MCF 10A (cell line): ENCODE measurements at regions of chr18 and their contacts with region 1.

Region 1: DNA sequence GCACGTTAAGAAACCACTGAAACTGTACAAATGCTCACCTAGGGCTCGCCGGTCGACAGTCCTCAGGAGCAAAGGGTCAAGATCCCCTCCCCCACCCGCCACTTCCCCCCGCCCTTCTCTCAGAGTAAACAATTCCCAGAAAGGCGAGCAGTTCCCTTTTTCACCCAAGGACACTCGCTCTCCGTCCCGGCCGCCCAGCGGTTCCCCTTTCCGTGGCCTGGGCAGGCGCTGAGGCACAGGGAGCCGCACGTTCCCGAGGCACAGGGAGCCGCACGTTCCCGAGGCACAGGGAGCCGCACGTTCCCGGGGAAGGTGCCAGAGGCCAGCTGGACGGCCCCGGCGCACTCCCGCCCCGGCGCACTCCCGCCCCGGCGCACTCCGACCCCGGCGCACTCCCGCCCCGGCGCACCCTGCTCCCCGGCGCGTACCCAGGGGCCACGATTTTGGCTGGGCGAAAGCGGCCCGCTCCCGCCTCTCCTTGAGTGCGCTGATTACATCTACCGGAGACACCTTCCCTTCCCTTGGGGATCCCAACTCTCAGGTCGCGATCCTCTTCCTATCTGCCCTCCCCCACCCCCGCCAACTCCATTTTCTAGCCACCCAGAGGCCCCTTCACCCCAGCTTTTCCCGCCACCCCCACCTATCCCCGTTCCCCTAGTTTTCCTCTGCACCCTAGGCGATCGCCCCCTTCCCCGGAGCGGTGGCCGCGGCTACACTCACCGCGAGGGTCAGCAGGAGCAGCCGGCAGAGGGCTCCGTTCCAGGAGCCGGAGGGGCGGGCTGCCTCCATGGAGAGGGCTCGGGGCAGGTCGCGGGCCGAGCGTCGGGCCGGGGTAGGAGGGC is 817 bp downstream of the DSC2 start:
- DNase-seq: peak; percentile 53
- H3K4me3 Mint-ChIP-seq: peak overlapping the region; percentile 82
- H3K27ac Mint-ChIP-seq: peak overlapping the region; percentile 81
- H3K4me1 Mint-ChIP-seq: peaks cover 30% of the 10 kb centered on the region
- H3K27me3 Mint-ChIP-seq: no peaks in the 10 kb centered on the region
- CTCF ChIP-seq: no peak

Region 2: GRCh38 chr18:31197676-31198075 is 96.3 kb after region 1 on chr18:
- CTCF ChIA-PET with region 1: interaction called, 3 read pairs
- POLR2A ChIA-PET with region 1: interaction called, 83 read pairs
- intact Hi-C with region 1: no loop called
- DNase-seq: peak; percentile 69
- H3K4me3 Mint-ChIP-seq: no peak overlapping the region
- H3K27ac Mint-ChIP-seq: no peak overlapping the region
- H3K4me1 Mint-ChIP-seq: peaks cover 20% of the 10 kb centered on the region
- H3K27me3 Mint-ChIP-seq: no peaks in the 10 kb centered on the region
- CTCF ChIP-seq: no peak

Region 3: GRCh38 chr18:31206787-31207381 is 105.5 kb after region 1 on chr18:
- CTCF ChIA-PET with region 1: interaction called, 4 read pairs
- POLR2A ChIA-PET with region 1: interaction called, 22 read pairs
- intact Hi-C with region 1: no loop called
- DNase-seq: peak; percentile 94
- H3K4me3 Mint-ChIP-seq: peak overlapping the region; percentile 69
- H3K27ac Mint-ChIP-seq: peak overlapping the region; percentile 77
- H3K4me1 Mint-ChIP-seq: peaks cover 32% of the 10 kb centered on the region
- H3K27me3 Mint-ChIP-seq: no peaks in the 10 kb centered on the region
- CTCF ChIP-seq: peak; percentile 7

Region 4: GRCh38 chr18:31255953-31256352 is 154.5 kb after region 1 on chr18:
- CTCF ChIA-PET with region 1: no interaction called
- POLR2A ChIA-PET with region 1: interaction called, 10 read pairs
- intact Hi-C with region 1: no loop called
- DNase-seq: peak; percentile 85
- H3K4me3 Mint-ChIP-seq: peak overlapping the region; percentile 12
- H3K27ac Mint-ChIP-seq: peak overlapping the region; percentile 64
- H3K4me1 Mint-ChIP-seq: peaks cover 16% of the 10 kb centered on the region
- H3K27me3 Mint-ChIP-seq: no peaks in the 10 kb centered on the region
- CTCF ChIP-seq: no peak

Region 5: DNA sequence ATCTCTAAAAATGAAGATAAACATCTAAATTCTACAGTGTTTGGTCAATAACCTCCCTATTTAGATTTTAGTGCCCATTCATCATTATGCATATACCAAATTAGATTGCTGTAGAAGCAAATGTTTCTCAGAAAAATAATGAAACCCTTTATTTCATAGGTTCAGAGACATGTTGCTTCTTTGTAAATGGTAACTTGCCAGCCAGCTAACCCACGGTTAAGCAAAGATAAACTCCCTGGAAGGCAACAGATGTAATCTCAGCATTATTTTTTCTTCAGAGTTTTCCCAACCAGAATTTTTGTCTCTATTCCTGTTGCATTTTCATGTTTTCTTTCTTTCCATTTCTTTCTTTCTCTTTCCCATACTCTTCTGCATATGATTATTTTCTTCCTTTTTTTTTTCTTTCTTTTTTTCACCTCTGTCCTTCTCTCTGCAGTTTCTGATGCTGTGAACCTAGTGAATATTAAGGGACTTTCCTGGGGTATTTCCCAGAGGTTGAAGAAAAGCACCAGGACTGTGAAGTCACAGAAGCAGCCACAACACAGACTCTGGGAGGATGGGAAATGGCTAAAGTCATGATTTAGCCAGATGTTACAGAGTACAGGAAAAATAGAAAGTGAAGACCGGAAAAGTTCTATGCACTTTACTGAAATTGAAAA is 166.5 kb after region 1 on chr18:
- CTCF ChIA-PET with region 1: interaction called, 4 read pairs
- POLR2A ChIA-PET with region 1: interaction called, 3 read pairs
- intact Hi-C with region 1: loop called (anchors 2 kb)
- DNase-seq: no peak
- H3K4me3 Mint-ChIP-seq: peak overlapping the region; percentile 12
- H3K27ac Mint-ChIP-seq: peak overlapping the region; percentile 84
- H3K4me1 Mint-ChIP-seq: peaks cover 28% of the 10 kb centered on the region
- H3K27me3 Mint-ChIP-seq: no peaks in the 10 kb centered on the region
- CTCF ChIP-seq: no peak

Region 6: DNA sequence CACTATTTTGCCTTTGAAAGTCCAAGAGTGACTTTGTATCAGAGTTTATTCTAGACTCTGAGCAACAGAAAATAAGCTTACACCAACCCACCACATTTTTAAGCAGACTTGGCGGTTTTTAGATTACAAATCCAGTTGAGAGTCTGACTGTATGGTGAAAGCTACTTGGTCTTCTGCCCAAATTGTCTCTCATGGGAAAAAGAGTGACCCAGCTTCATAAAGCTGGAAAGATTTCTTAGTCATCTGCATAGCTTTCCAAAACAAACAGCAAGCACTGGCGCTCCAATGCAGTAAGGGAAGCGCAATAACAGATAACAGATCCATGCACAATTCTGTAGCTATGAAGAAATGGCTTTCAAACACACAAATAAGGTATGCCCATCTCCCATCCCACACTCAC is 223.6 kb after region 1 on chr18:
- CTCF ChIA-PET with region 1: no interaction called
- POLR2A ChIA-PET with region 1: interaction called, 11 read pairs
- intact Hi-C with region 1: no loop called
- DNase-seq: peak; percentile 94
- H3K4me3 Mint-ChIP-seq: no peak overlapping the region
- H3K27ac Mint-ChIP-seq: peak overlapping the region; percentile 50
- H3K4me1 Mint-ChIP-seq: peaks cover 8% of the 10 kb centered on the region
- H3K27me3 Mint-ChIP-seq: no peaks in the 10 kb centered on the region
- CTCF ChIP-seq: no peak

Region 7: DNA sequence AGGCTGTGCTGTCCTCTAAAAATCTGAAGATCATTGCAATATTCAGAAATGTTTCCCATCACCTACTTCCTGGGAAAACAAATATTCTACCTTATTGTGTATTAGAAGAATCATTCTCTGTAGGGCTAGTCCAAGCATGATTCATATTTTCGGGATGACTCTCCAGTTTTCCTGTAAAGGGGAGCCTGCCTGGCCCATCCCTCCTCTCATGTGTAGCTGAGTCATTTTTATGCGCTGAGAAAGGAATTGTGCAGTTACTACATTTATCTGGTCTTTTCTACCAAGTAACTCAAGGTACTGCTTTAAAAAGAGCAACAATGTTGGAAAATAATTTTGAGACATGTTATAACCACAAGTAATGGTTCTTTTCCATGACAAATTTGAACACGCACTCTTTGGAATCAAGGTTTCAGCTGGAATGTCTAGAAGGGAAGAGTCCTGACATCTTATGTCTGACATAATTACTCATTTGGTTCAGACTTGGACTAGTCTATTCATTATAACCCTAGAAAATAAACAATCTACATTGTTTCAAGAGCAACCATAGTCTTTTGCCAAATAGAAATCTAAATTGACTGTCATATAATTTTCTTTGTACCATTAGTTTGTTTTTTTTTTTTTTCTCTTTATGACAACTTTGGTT is 352.8 kb after region 1 on chr18:
- CTCF ChIA-PET with region 1: interaction called, 6 read pairs
- POLR2A ChIA-PET with region 1: interaction called, 16 read pairs
- intact Hi-C with region 1: no loop called
- DNase-seq: peak; percentile 96
- H3K4me3 Mint-ChIP-seq: peak overlapping the region; percentile 67
- H3K27ac Mint-ChIP-seq: peak overlapping the region; percentile 94
- H3K4me1 Mint-ChIP-seq: peaks cover 23% of the 10 kb centered on the region
- H3K27me3 Mint-ChIP-seq: no peaks in the 10 kb centered on the region
- CTCF ChIP-seq: no peak